Activated naive CD4-positive, alpha-beta T cell treated with anti-CD3 and anti-CD28 coated beads for 36 hours (primary cell): ENCODE measurements at regions of chr2 and their contacts with region 1.

Region 1: DNA sequence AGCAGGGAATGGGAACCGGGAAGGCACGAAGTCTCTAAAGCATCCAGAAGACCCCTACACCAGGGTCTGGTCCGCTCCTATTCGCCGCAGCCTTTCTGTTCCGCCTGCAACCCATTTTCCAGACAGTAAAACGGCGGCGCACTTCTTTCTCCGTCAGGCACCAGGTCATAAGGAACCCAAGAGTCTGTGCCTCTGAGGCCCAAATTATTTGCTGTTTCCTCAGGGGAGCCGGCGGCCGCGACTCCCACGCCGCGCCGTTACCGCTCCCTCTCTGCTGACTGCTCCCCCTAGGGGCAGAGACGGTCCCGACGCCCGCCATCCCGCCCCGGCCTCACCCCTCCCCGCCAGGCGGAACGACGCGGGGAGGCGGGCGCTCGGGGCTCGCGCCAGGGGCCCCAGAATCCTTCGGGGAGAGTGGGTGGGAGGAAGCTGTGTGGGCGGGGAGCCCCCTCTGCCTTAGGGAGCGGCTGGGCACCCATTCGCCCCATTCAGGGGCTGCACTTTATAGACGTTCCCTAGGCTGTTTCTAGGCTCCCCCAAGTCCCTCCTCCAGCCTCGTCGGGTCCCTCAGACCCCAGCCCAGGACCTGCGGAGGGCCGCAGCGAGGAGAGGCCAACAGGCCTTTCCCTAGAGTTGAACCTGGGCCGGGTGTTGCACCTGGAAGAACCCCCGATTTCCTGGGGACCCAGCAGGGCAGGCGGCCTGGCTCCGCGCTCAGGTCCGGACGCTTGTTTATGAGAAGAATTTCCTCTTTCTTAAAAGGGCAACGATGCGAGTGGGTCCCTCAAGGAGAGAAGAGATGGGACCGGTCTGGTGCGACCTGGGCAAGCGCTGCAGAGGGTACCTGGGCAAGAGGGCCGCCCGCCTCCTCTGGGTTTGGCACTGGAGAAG is 3.6 kb upstream of the CTDSP1 start:
- DNase-seq: peak; percentile 95
- H3K4me3 Mint-ChIP-seq: peak overlapping the region; percentile 88
- H3K27ac Mint-ChIP-seq: peak overlapping the region; percentile 92
- H3K4me1 Mint-ChIP-seq: peaks cover 25% of the 10 kb centered on the region
- H3K27me3 Mint-ChIP-seq: peaks cover 11% of the 10 kb centered on the region

Region 2: GRCh38 chr2:218186355-218186766 is 209.7 kb before region 1 on chr2:
- CTCF ChIA-PET with region 1: no interaction called
- intact Hi-C with region 1: loop called (anchors 2 kb)
- DNase-seq: peak; percentile 87
- H3K4me3 Mint-ChIP-seq: no peak overlapping the region
- H3K27ac Mint-ChIP-seq: no peak overlapping the region
- H3K4me1 Mint-ChIP-seq: peaks cover 7% of the 10 kb centered on the region
- H3K27me3 Mint-ChIP-seq: no peaks in the 10 kb centered on the region

Region 3: GRCh38 chr2:218229239-218229638 is 166.8 kb before region 1 on chr2:
- CTCF ChIA-PET with region 1: no interaction called
- intact Hi-C with region 1: loop called (anchors 1 kb)
- DNase-seq: peak; percentile 66
- H3K4me3 Mint-ChIP-seq: peak overlapping the region; percentile 32
- H3K27ac Mint-ChIP-seq: peak overlapping the region; percentile 87
- H3K4me1 Mint-ChIP-seq: peaks cover 81% of the 10 kb centered on the region
- H3K27me3 Mint-ChIP-seq: no peaks in the 10 kb centered on the region

Region 4: GRCh38 chr2:218292048-218293014 is 103.7 kb before region 1 on chr2 and contains the start of gene TMBIM1:
- CTCF ChIA-PET with region 1: interaction called, 9 read pairs
- intact Hi-C with region 1: loop called (anchors 1 kb)
- DNase-seq: peak; percentile 75
- H3K4me3 Mint-ChIP-seq: peak within 1 kb of the TSS; percentile 78
- H3K27ac Mint-ChIP-seq: peak within 1 kb of the TSS; percentile 94
- H3K4me1 Mint-ChIP-seq: peaks cover 46% of the 10 kb centered on the region
- H3K27me3 Mint-ChIP-seq: no peaks in the 10 kb centered on the region
- total RNA-seq, gene TMBIM1: 43.1 to 43.4 TPM

Region 5: DNA sequence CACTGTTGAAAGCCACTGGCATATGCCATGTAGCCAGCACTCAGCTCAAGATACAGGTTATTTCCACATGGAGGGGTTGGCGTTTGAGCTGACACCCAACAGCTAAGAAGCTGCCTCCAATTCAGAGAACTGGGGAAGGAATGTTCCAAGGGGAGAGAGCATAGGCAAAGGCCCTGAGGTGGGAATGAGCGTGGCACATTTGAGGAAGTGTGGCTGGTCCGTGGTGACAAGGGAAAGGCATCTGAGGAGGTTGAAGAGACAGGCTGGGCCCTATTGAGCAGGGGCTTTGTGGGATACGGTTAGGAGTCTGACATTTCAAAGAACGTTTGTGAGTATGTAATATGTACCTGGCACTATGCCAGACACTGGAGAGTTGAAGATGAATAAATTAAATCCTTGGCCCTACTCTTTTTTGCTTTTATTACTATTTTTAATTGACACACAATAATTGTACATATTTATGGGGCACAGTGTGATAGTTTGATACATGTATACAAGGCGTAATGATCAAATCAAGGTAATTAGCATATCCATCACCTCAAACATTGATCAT is 76.2 kb before region 1 on chr2:
- CTCF ChIA-PET with region 1: no interaction called
- intact Hi-C with region 1: loop called (anchors 5 kb)
- DNase-seq: no peak
- H3K4me3 Mint-ChIP-seq: no peak overlapping the region
- H3K27ac Mint-ChIP-seq: no peak overlapping the region
- H3K4me1 Mint-ChIP-seq: peaks cover 58% of the 10 kb centered on the region
- H3K27me3 Mint-ChIP-seq: peaks cover 4% of the 10 kb centered on the region

Region 6: DNA sequence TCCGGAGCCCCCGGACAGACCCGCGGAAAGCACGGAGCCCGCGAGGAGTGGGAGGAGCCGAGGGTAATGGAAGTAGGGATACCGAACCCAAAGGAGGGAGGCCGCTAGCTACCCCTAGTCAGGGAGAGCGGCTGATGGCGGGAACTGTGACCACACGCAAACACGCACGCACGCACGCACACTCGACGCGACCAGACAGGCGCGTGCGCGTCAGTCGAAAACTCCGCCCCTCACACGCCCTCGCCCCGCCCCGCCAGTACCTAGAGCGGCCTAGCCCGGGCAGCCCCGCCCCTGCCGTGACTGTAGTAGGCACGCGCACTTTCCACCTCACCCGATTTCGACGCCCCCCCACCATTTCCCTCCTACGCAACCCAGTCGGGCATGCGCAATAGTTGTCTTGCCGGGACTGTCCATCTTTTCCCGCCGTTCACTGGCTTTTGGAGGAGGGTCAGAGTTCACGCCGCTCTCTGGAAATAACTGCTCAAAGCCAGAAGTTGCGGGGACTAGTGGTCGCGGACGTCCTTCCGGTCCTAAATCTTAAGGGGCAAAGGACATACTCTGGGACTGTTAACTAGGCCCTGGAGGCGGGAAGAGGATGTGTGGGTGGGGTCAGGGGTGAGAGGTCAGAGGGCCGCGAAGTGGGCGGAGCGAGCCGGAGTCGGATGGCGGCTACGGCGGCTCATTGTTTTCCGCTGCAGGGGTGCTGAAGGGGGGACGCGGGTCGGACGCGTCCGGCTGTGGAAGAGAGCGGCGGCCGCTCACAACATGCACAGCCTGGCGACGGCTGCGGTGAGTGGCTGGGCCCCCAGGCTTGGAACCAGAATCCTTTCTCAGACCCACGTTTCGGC is 172.4 kb after region 1 on chr2 and contains the starts of genes CNOT9 and USP37:
- CTCF ChIA-PET with region 1: no interaction called
- intact Hi-C with region 1: loop called (anchors 1 kb)
- DNase-seq: peak; percentile 100
- H3K4me3 Mint-ChIP-seq: peak within 1 kb of the TSS; percentile 91
- H3K27ac Mint-ChIP-seq: peak within 1 kb of the TSS; percentile 100
- H3K4me1 Mint-ChIP-seq: peaks cover 60% of the 10 kb centered on the region
- H3K27me3 Mint-ChIP-seq: no peaks in the 10 kb centered on the region
- total RNA-seq, gene CNOT9: 74.3 to 78.6 TPM
- total RNA-seq, gene USP37: 21.7 to 23.2 TPM

Region 7: GRCh38 chr2:218892693-218893348 is 496.8 kb after region 1 on chr2:
- CTCF ChIA-PET with region 1: no interaction called
- intact Hi-C with region 1: loop called (anchors 5 kb)
- DNase-seq: peak; percentile 90
- H3K4me3 Mint-ChIP-seq: peak overlapping the region; percentile 75
- H3K27ac Mint-ChIP-seq: peak overlapping the region; percentile 76
- H3K4me1 Mint-ChIP-seq: peaks cover 45% of the 10 kb centered on the region
- H3K27me3 Mint-ChIP-seq: no peaks in the 10 kb centered on the region